GM10248 (cell line): ENCODE measurements at regions of chr7 and their contacts with region 1.

Region 1: DNA sequence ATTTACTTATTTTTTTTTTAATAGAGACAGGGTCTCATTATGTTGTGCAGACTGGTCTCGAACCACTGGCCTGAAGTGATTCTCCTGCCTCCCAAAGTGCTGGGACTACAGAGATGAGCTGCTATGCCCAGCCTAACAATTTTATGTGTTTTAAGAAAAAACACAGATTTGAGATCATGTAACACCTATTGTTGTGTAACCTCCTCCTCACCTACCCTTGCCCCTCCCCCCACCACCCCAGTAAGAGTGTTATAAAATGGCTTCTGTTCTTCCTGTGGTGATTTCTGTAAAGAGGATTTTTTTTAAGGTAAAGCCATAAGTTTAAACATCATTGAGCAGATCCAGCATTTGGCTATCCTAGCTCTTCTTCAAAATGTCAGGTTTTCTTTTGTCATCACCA is 7.6 kb downstream of the ARMC10 start:
- DNase-seq: no peak
- CTCF ChIP-seq: no peak

Region 2: DNA sequence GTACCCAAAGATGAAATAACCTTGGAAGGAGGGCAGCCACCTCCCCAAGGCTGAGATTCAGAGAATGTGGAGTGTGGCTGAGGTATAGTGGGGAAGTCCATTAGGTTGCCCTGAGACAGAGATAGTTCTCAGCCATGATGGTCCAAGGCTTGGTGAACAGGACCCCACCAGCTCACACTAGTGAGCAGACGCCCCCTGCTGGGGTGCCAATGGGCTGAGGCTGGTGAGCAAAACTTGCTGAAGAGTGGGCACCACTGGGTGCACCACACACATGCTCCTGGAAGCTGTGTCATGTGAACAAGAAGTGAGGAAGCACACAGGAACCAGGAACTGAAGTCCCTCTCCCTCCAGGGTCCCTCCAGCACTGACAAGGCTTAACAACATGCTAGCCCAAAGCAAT is 16.8 kb before region 1 on chr7:
- CTCF ChIA-PET with region 1: interaction called, 16 read pairs
- POLR2A ChIA-PET with region 1: no interaction called
- DNase-seq: peak; percentile 34
- CTCF ChIP-seq: peak; percentile 52

Region 3: GRCh38 chr7:103094102-103094501 is 11.6 kb after region 1 on chr7:
- CTCF ChIA-PET with region 1: interaction called, 15 read pairs
- POLR2A ChIA-PET with region 1: no interaction called
- DNase-seq: no peak
- CTCF ChIP-seq: no peak